T-cell (primary cell): ENCODE measurements at regions of chr4 and their contacts with region 1.

Region 1: GRCh38 chr4:17810260-17811077 is at the starts of genes DCAF16 and NCAPG:
- DNase-seq: peak; percentile 94 to 100 (median 97)
- ATAC-seq: peak; percentile 92 to 95 (median 92)
- H3K4me3 ChIP-seq: peak within 1 kb of the TSS; percentile 91 to 93
- H3K4me3 Mint-ChIP-seq: peak within 1 kb of the TSS; percentile 95 to 100 (median 95)
- H3K27ac ChIP-seq: peak within 1 kb of the TSS; percentile 95
- H3K27ac Mint-ChIP-seq: peak within 1 kb of the TSS; percentile 94 to 99
- H3K4me1 ChIP-seq: peaks cover 16 to 31% of the 10 kb centered on the region in 2 experiments
- H3K4me1 Mint-ChIP-seq: peaks cover 57 to 68% (median 62%) of the 10 kb centered on the region in 3 donors
- H3K27me3 ChIP-seq: no peaks in the 10 kb centered on the region
- H3K27me3 Mint-ChIP-seq: no peaks in the 10 kb centered on the region
- total RNA-seq, gene DCAF16: 62.6 to 77.6 (median 73.2) TPM
- total RNA-seq, gene NCAPG: 0.73 to 1.8 (median 1.5) TPM

Region 2: GRCh38 chr4:17680559-17681280 is 129.7 kb before region 1 on chr4:
- CTCF ChIA-PET with region 1: no interaction called
- POLR2A ChIA-PET with region 1: no interaction called
- DNase-seq: no peak
- ATAC-seq: no peak
- H3K4me3 ChIP-seq: no peak overlapping the region
- H3K4me3 Mint-ChIP-seq: no peak overlapping the region
- H3K27ac ChIP-seq: no peak overlapping the region
- H3K27ac Mint-ChIP-seq: no peak overlapping the region
- H3K4me1 ChIP-seq: no peaks in the 10 kb centered on the region
- H3K4me1 Mint-ChIP-seq: no peaks in the 10 kb centered on the region
- H3K27me3 ChIP-seq: peaks cover 0 to 8% of the 10 kb centered on the region in 2 experiments
- H3K27me3 Mint-ChIP-seq: peaks cover 0 to 3% of the 10 kb centered on the region in 2 donors

Region 3: GRCh38 chr4:17786567-17786966 is 23.9 kb before region 1 on chr4:
- CTCF ChIA-PET with region 1: no interaction called
- POLR2A ChIA-PET with region 1: no interaction called
- DNase-seq: no peak
- ATAC-seq: no peak
- H3K4me3 ChIP-seq: no peak overlapping the region
- H3K4me3 Mint-ChIP-seq: no peak overlapping the region
- H3K27ac ChIP-seq: no peak overlapping the region
- H3K27ac Mint-ChIP-seq: no peak overlapping the region
- H3K4me1 ChIP-seq: peaks cover 0 to 2% of the 10 kb centered on the region in 2 experiments
- H3K4me1 Mint-ChIP-seq: peaks cover 15 to 18% (median 17%) of the 10 kb centered on the region in 3 donors
- H3K27me3 ChIP-seq: peaks cover 5 to 10% of the 10 kb centered on the region in 2 experiments
- H3K27me3 Mint-ChIP-seq: peaks cover 12 to 14% of the 10 kb centered on the region in 2 donors

Region 4: GRCh38 chr4:17823871-17824669 is 13.6 kb after region 1 on chr4:
- CTCF ChIA-PET with region 1: interaction called in 1 of 2 experiments, 13 read pairs
- POLR2A ChIA-PET with region 1: interaction called in 1 of 2 experiments, 12 read pairs
- DNase-seq: no peak
- ATAC-seq: no peak
- H3K4me3 ChIP-seq: no peak overlapping the region
- H3K4me3 Mint-ChIP-seq: no peak overlapping the region
- H3K27ac ChIP-seq: no peak overlapping the region
- H3K27ac Mint-ChIP-seq: no peak overlapping the region
- H3K4me1 ChIP-seq: no peaks in the 10 kb centered on the region
- H3K4me1 Mint-ChIP-seq: peaks cover 0 to 29% (median 8%) of the 10 kb centered on the region in 3 donors
- H3K27me3 ChIP-seq: no peaks in the 10 kb centered on the region
- H3K27me3 Mint-ChIP-seq: no peaks in the 10 kb centered on the region